ENCODE measurements at regions of chr9 and their contacts with region 1.

Region 1: DNA sequence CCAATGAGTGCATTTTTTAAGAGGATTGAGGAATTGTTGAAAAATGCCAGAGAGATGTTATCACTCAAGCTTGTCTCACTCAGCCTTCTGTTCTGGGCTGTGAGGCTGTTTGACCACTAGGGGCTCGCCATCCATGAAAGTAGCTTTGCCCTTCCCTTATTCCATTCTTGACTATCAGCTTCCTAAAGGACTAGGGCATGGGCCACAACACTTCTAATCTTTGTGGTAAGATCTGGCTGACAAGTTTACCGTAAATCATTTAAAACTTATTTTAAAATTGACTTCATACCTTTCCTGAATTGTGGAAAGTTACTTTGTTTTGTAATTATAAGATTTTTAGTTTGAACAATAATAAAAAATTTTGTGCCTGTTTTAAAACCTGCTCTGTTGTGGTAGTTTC is 49.5 kb downstream of the TJP2 start:
- DNase-seq: peak in 1 of 2 experiments; percentile 53
- H3K4me3 ChIP-seq: no peak overlapping the region
- H3K27ac ChIP-seq: no peak overlapping the region
- H3K4me1 ChIP-seq: peaks cover 0 to 9% (median 2%) of the 10 kb centered on the region in 4 experiments; a peak in 2 of 7 replicates
- H3K27me3 ChIP-seq: no peaks in the 10 kb centered on the region
- CTCF ChIP-seq: peak; percentile 70 to 93 (median 73)
- EP300 ChIP-seq: no peak
- POLR2A ChIP-seq: no peak
- RAD21 ChIP-seq: peak; percentile 58 to 70

Region 2: GRCh38 chr9:69199769-69200470 is 23.7 kb before region 1 on chr9:
- CTCF ChIA-PET with region 1: interaction called, 12 read pairs
- POLR2A ChIA-PET with region 1: no interaction called
- DNase-seq: no peak
- H3K4me3 ChIP-seq: no peak overlapping the region
- H3K27ac ChIP-seq: no peak overlapping the region
- H3K4me1 ChIP-seq: peaks cover 6 to 28% (median 16%) of the 10 kb centered on the region in 4 experiments; a peak in 6 of 7 replicates
- H3K27me3 ChIP-seq: no peaks in the 10 kb centered on the region
- CTCF ChIP-seq: peak; percentile 3 to 26 (median 8); a peak in 2 of 4 replicates
- EP300 ChIP-seq: no peak
- POLR2A ChIP-seq: no peak
- RAD21 ChIP-seq: peak; percentile 29 to 42; a peak in 3 of 4 replicates

Region 3: GRCh38 chr9:69211424-69212036 is 12.1 kb before region 1 on chr9:
- CTCF ChIA-PET with region 1: interaction called, 18 read pairs
- POLR2A ChIA-PET with region 1: no interaction called
- DNase-seq: no peak
- H3K4me3 ChIP-seq: no peak overlapping the region
- H3K27ac ChIP-seq: no peak overlapping the region
- H3K4me1 ChIP-seq: peaks cover 0 to 9% (median 7%) of the 10 kb centered on the region in 4 experiments; a peak in 5 of 7 replicates
- H3K27me3 ChIP-seq: no peaks in the 10 kb centered on the region
- CTCF ChIP-seq: no peak
- EP300 ChIP-seq: no peak
- POLR2A ChIP-seq: no peak
- RAD21 ChIP-seq: no peak

Region 4: GRCh38 chr9:69243116-69243515 is 19.5 kb after region 1 on chr9:
- CTCF ChIA-PET with region 1: interaction called, 11 read pairs
- POLR2A ChIA-PET with region 1: interaction called, 3 read pairs
- DNase-seq: no peak
- H3K4me3 ChIP-seq: no peak overlapping the region
- H3K27ac ChIP-seq: no peak overlapping the region
- H3K4me1 ChIP-seq: no peaks in the 10 kb centered on the region
- H3K27me3 ChIP-seq: no peaks in the 10 kb centered on the region
- CTCF ChIP-seq: no peak
- EP300 ChIP-seq: no peak
- POLR2A ChIP-seq: no peak
- RAD21 ChIP-seq: no peak